HepG2 (cell line): ENCODE measurements at regions of chr6 and their contacts with region 1.

Region 1: DNA sequence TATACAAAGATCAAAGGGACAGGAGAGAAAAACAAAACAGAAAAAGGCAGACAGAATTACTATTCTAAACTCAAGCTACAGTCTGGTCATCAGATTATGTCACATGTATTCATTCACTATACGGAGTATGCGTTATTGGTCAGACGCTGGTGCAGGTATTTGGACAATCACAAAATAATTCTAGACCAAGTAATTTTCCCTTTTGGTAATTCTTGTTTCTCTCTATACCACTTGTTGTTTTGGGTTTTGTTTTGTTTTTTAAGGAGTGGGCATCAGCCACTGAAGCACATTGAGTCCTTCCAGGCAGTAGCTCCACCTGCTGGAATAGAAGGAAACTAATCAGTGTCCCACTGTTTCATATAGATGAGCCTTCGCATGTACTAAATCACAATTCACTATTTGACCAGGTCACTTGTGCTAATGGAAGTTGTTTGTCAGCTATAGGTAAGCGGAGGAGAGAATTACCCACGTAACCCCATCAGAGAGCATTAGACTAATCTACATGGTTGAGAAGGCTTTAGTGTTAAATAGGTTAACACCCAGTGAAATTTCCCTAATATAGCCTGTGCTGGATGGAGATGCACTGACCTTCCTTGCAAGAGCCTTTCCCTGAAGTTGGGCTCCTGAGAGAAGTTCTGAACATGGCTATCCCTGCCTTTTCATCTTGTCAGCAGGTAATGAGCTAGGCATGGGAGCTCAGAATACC is 77.9 kb downstream of the TNFAIP3 start:
- DNase-seq: peak; percentile 50
- ATAC-seq: peak; percentile 95
- H3K4me3 ChIP-seq: no peak overlapping the region
- H3K27ac ChIP-seq: no peak overlapping the region
- H3K4me1 ChIP-seq: peaks cover 5% of the 10 kb centered on the region
- H3K27me3 ChIP-seq: peaks cover 4 to 7% of the 10 kb centered on the region in 2 experiments; a peak in 2 of 5 replicates
- CTCF ChIP-seq: peak; percentile 90
- EP300 ChIP-seq: no peak
- POLR2A ChIP-seq: no peak
- RAD21 ChIP-seq: peak; percentile 84

Region 2: GRCh38 chr6:137571854-137572253 is 373.1 kb before region 1 on chr6:
- CTCF ChIA-PET with region 1: no interaction called
- POLR2A ChIA-PET with region 1: no interaction called
- in situ Hi-C with region 1: no loop called
- intact Hi-C with region 1: no loop called
- DNase-seq: peak; percentile 54
- ATAC-seq: peak; percentile 78
- H3K4me3 ChIP-seq: no peak overlapping the region
- H3K27ac ChIP-seq: no peak overlapping the region
- H3K4me1 ChIP-seq: peaks cover 8% of the 10 kb centered on the region
- H3K27me3 ChIP-seq: peaks cover 0 to 2% of the 10 kb centered on the region in 2 experiments; a peak in 1 of 5 replicates
- CTCF ChIP-seq: peak; percentile 45
- EP300 ChIP-seq: no peak
- POLR2A ChIP-seq: no peak
- RAD21 ChIP-seq: no peak

Region 3: DNA sequence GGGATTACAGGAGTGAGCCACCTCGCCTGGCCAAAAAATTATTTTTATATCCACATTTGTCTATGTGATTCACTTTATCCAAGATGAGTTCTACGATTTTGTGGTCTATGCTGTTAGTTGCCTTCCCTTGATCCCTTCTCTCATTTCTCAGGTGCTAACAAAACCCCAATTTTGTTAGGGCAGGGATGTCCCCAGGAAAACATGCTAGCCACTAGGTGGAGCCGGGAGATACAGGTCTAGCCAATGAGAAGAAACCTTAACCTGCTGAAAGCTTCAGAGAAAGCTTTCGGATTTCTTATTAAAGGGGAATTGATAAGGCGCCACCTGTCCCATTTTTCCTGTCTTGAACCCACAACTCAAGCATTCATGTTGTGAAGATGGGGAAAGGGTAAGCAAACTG is 283.3 kb before region 1 on chr6:
- CTCF ChIA-PET with region 1: interaction called, 4 read pairs
- POLR2A ChIA-PET with region 1: no interaction called
- in situ Hi-C with region 1: no loop called
- intact Hi-C with region 1: loop called (anchors 1 kb)
- DNase-seq: peak; percentile 48
- ATAC-seq: peak; percentile 83
- H3K4me3 ChIP-seq: no peak overlapping the region
- H3K27ac ChIP-seq: no peak overlapping the region
- H3K4me1 ChIP-seq: peaks cover 54% of the 10 kb centered on the region
- H3K27me3 ChIP-seq: peaks cover 0 to 2% of the 10 kb centered on the region in 2 experiments; a peak in 2 of 5 replicates
- CTCF ChIP-seq: peak; percentile 71
- EP300 ChIP-seq: no peak
- POLR2A ChIP-seq: no peak
- RAD21 ChIP-seq: no peak

Region 4: DNA sequence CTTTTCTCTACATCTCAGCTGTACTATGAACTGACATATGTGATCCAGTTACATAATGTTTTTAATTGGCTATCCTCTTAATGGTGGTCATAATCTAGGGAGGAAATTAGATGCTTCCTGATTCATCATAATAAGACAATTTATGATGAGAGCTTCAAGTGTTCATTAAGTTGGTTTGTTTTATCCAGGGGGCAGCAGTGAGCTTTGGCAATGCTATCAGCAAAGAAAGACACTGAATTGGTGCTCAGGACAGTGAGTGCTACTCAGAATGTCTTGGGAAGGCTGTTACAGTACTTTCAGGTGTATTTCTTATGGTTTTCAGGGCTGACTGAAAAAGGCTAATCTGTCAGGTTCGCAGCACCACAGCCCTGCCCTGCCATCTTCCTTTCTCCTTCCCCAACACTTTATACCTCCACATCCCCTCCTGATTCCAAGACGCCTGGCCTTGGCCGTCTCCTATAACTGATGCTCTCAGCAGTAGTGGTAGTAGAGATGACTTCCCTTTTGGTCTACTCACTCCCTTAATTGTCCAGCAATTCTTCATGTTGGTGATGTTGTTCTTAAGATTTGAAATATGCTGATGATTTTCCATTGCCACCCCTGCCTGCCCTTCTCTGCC is 144.9 kb before region 1 on chr6:
- CTCF ChIA-PET with region 1: no interaction called
- POLR2A ChIA-PET with region 1: no interaction called
- in situ Hi-C with region 1: no loop called
- intact Hi-C with region 1: loop called (anchors 10 kb)
- DNase-seq: peak; percentile 59
- ATAC-seq: peak; percentile 41; the same call in 2 of the 3 replicates
- H3K4me3 ChIP-seq: no peak overlapping the region
- H3K27ac ChIP-seq: no peak overlapping the region
- H3K4me1 ChIP-seq: peaks cover 100% of the 10 kb centered on the region
- H3K27me3 ChIP-seq: no peaks in the 10 kb centered on the region
- CTCF ChIP-seq: peak; percentile 58
- EP300 ChIP-seq: no peak
- POLR2A ChIP-seq: no peak
- RAD21 ChIP-seq: peak; percentile 52